ENCODE measurements at regions of chr22 and their contacts with region 1.

Region 1: DNA sequence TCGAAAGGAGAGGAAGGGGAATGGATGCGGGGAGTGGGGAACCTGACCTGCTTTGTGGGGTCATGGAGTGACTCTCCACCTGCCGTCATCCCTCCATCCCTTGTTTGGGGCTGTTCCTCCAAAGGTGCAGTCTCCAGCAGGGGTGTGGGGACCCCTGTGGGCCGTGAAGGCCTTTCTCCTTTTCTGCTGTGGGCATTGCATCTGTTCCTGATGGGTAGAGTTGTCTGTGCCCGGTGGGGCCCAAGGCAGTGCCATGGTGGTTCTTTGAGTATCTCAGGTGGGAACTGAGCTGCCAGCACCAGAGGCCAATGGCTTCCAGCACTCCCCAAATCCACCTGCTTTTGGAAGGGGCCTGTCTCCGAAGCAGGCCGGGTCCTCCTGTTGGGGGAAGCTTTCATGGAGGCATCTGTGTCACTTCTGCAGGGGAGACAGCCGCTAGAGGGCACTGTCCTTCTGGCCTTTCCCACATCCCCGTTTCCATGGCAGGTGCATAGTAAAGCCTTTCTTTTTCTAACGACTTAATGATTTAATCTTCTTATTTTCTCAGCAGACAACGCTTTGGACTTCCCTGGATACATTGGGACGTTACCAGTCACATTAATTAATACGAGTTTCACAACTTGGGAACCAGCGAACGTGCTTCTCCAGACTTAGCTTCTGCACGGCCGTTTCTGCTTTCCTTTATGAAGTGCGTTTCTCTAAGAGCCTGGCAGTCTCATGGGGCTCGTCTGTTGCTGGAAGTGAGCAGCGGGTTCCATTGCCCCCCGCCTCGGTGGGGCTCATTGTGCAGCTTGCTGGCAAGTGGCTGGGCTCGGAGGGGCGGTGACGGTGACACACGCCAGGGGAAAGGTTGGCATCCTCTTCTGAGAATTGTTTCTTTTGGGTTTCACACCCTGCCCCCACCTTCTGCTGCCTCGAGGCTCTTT is 57.1 kb downstream of the PARVB start:
- DNase-seq: peak; percentile 67 to 79 (median 73)
- H3K4me3 ChIP-seq: no peak overlapping the region
- H3K27ac ChIP-seq: no peak overlapping the region
- H3K4me1 ChIP-seq: no peaks in the 10 kb centered on the region
- H3K27me3 ChIP-seq: no peaks in the 10 kb centered on the region

Region 2: DNA sequence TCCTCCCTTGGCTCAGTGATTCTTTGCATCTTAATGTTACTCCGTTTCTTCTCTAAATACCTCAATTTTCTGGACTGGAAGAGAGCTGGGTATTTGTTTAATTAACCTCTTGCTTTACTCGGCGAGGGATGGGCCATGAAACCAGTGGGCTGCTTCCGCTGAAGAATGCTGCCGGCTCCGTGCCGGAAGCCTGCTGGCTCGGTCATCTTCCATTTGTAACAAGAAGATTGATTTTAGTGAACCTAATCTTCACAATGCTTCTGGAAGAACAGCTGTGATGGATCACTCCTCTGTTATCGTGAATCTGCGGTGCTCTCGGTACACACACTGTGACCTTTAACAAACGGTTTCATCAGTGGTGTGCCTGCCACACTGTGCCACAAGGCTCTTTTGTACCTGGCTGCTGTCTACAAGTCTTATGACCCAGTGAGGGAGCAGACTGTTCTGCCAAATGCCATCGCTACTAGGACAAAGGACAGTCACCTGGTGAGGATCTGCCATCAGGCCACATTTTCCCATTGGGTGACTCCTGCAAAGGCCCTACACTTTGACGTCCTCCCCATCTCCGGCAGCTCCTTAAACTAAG is 82.4 kb before region 1 on chr22:
- CTCF ChIA-PET with region 1: interaction called, 328 read pairs
- POLR2A ChIA-PET with region 1: interaction called, 5 read pairs
- DNase-seq: no peak
- H3K4me3 ChIP-seq: no peak overlapping the region
- H3K27ac ChIP-seq: no peak overlapping the region
- H3K4me1 ChIP-seq: peaks cover 0 to 13% (median 11%) of the 10 kb centered on the region in 4 experiments
- H3K27me3 ChIP-seq: no peaks in the 10 kb centered on the region

Region 3: DNA sequence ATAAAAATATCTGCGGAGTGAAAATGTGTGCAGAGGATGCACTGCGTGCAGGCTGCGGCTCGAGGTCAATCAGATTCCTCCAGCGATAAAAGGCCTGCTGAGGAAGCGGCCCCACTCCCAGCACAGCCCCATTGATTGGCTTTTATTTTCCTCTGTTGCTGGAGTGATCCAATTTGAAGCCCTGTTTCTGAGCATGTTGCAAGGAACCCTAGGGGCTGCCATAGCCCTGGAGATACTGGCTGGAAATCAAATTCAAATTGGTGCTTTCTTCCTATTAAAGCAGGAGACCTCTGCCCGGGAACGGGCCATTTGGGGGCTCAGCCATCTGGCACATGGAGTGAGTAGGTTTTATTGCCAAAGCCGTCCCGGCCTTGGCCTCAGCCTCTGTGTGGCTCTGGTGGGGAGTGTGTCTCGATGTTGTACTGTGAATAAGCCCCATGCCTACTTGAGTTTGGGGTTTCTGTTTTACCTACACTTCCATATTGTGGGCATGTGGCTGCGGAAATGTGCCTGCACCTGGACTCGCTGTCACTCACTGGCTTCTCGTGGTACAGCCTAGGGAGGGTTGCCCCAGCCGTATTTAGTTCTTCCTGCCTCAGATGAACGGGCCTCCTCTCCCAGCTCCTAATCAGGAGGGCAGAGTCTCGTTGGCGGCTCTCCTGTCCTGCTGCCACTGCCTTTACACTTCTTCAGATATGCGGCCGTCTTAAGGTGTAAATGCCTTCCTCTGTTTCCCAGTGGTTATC is 31.5 kb before region 1 on chr22:
- CTCF ChIA-PET with region 1: interaction called, 11 read pairs
- POLR2A ChIA-PET with region 1: no interaction called
- DNase-seq: peak in 2 of 3 donors; percentile 58 to 68
- H3K4me3 ChIP-seq: peak overlapping the region in 2 of 7 experiments; percentile 25 to 57
- H3K27ac ChIP-seq: peak overlapping the region in 1 of 2 experiments; percentile 52
- H3K4me1 ChIP-seq: peaks cover 4 to 69% (median 50%) of the 10 kb centered on the region in 4 experiments
- H3K27me3 ChIP-seq: no peaks in the 10 kb centered on the region

Region 4: GRCh38 chr22:44098966-44099530 is 17.8 kb after region 1 on chr22:
- CTCF ChIA-PET with region 1: interaction called, 15 read pairs
- POLR2A ChIA-PET with region 1: no interaction called
- DNase-seq: no peak
- H3K4me3 ChIP-seq: no peak overlapping the region
- H3K27ac ChIP-seq: no peak overlapping the region
- H3K4me1 ChIP-seq: no peaks in the 10 kb centered on the region
- H3K27me3 ChIP-seq: no peaks in the 10 kb centered on the region